Right ventricle myocardium inferior (tissue), 1 donor: ENCODE measurements at regions of chr9 and their contacts with region 1.

Region 1: GRCh38 chr9:129482521-129483414 is 138.1 kb downstream of the C9orf50 start:
- DNase-seq: peak; percentile 90
- ATAC-seq: peak; percentile 66

Region 2: GRCh38 chr9:129139993-129140396 is 342.8 kb before region 1 on chr9:
- intact Hi-C with region 1: loop called (anchors 2 kb)
- DNase-seq: peak; percentile 93
- ATAC-seq: peak; percentile 84

Region 3: GRCh38 chr9:129177791-129178559 is 304.8 kb before region 1 on chr9 and contains the start of gene IER5L:
- intact Hi-C with region 1: loop called (anchors 5 kb)
- DNase-seq: peak; percentile 98
- ATAC-seq: peak; percentile 84
- total RNA-seq, gene IER5L: 4.6 TPM

Region 4: DNA sequence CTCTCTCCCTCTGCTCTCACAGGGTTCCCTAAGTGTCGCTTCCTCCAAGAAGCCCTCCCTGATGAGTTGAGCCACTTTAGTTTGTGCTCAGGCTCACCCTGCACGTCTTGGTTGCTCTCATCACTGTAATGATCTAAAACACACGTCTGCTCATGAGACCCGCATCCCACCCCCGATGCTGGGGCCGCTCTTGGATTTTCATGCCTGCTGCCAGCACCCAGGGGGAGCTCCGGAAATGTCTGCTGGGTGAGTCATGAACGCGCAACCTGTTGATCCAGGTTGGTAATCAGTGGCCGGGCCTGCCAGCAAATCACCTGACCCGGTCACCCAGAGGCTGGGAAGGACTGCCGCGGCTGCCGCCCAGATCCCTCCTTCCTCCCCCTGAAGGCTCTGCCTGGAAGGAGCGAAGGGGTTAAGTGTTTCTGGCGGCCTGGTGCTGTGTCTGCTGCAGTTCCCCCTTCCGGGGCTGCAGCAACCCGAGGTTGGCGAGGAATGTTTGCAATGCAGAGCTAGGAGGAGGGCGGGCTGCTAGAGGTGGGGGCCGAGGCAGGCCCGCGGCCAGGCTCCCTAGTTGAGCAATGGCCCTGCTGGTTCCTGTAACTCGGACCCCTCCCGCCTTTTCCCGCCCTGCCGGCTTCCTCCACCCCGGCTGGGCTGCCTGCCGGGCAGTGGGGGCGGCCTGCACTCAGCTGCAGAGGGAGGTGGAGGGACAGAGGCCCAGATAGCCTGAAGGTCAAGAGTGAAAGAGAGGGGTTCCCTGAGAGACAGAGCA is 148.6 kb before region 1 on chr9:
- intact Hi-C with region 1: loop called (anchors 5 kb)
- DNase-seq: peak; percentile 97
- ATAC-seq: peak; percentile 92

Region 5: GRCh38 chr9:129436751-129437625 is 45.8 kb before region 1 on chr9:
- intact Hi-C with region 1: loop called (anchors 5 kb)
- DNase-seq: peak; percentile 87
- ATAC-seq: peak; percentile 74

Region 6: GRCh38 chr9:129460323-129461261 is 22.2 kb before region 1 on chr9:
- intact Hi-C with region 1: loop called (anchors 2 kb)
- DNase-seq: peak; percentile 99
- ATAC-seq: peak; percentile 93

Region 7: GRCh38 chr9:130138171-130138653 is 655.4 kb after region 1 on chr9:
- intact Hi-C with region 1: no loop called
- DNase-seq: no peak
- ATAC-seq: peak; percentile 75